K562 (cell line): ENCODE measurements at regions of chr3 and their contacts with region 1.

Region 1: GRCh38 chr3:152268555-152269425 is at the start of gene MBNL1:
- DNase-seq: peak; percentile 70 to 95 (median 79)
- ATAC-seq: peak; percentile 43
- H3K4me3 ChIP-seq: peak within 1 kb of the TSS; percentile 75
- H3K27ac ChIP-seq: peak within 1 kb of the TSS; percentile 96
- H3K4me1 ChIP-seq: peaks cover 8 to 22% of the 10 kb centered on the region in 2 experiments; a peak in 4 of 5 replicates
- H3K27me3 ChIP-seq: no peaks in the 10 kb centered on the region
- CTCF ChIP-seq: peak in 1 of 3 experiments; percentile 7; a peak in 1 of 6 replicates
- EP300 ChIP-seq: peak; percentile 65; the same call in 1 of the 2 replicates
- POLR2A ChIP-seq: peak; percentile 93
- RAD21 ChIP-seq: peak in 1 of 2 experiments; percentile 13; a peak in 2 of 4 replicates
- polyA plus RNA-seq, gene MBNL1: 70.3 to 87.3 TPM

Region 2: DNA sequence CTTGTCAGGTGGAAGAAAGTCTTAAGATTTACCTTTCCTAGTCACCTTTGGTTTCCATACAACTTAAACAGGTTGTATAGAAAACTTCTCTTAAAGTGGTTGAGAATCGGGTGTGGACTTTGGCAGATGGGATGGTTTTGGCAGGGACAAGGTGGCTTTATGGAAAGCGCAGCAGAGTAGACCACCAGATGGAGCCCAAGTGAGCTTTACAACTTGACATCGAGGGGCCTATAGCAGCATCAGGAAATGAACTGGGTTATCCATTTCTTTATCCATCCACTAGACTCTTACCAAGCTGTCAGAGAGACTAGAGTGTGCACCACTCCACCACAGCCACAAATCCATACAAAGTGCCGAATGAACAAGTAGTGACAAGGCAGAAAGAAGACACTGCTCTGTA is 85.3 kb before region 1 on chr3:
- CTCF ChIA-PET with region 1: no interaction called
- POLR2A ChIA-PET with region 1: interaction called, 4 read pairs
- in situ Hi-C with region 1: no loop called
- intact Hi-C with region 1: loop called (anchors 2 kb)
- DNase-seq: peak; percentile 51 to 88 (median 63)
- ATAC-seq: peak; percentile 97
- H3K4me3 ChIP-seq: no peak overlapping the region
- H3K27ac ChIP-seq: no peak overlapping the region
- H3K4me1 ChIP-seq: peaks cover 0 to 10% of the 10 kb centered on the region in 2 experiments; a peak in 2 of 5 replicates
- H3K27me3 ChIP-seq: no peaks in the 10 kb centered on the region
- CTCF ChIP-seq: peak; percentile 73 to 84 (median 78)
- EP300 ChIP-seq: no peak
- POLR2A ChIP-seq: no peak
- RAD21 ChIP-seq: peak; percentile 83 to 94

Region 3: GRCh38 chr3:152241142-152242017 is 27.4 kb before region 1 on chr3:
- CTCF ChIA-PET with region 1: no interaction called
- POLR2A ChIA-PET with region 1: interaction called, 35 read pairs
- in situ Hi-C with region 1: no loop called
- intact Hi-C with region 1: loop called (anchors 1 kb)
- DNase-seq: peak in 2 of 4 experiments; percentile 22 to 65
- ATAC-seq: no peak
- H3K4me3 ChIP-seq: no peak overlapping the region
- H3K27ac ChIP-seq: peak overlapping the region; percentile 92
- H3K4me1 ChIP-seq: peaks cover 13 to 34% of the 10 kb centered on the region in 2 experiments
- H3K27me3 ChIP-seq: no peaks in the 10 kb centered on the region
- CTCF ChIP-seq: no peak
- EP300 ChIP-seq: peak; percentile 73
- POLR2A ChIP-seq: no peak
- RAD21 ChIP-seq: no peak

Region 4: GRCh38 chr3:152291649-152292066 is 22.9 kb after region 1 on chr3:
- CTCF ChIA-PET with region 1: no interaction called
- POLR2A ChIA-PET with region 1: interaction called, 4 read pairs
- in situ Hi-C with region 1: no loop called
- intact Hi-C with region 1: loop called (anchors 2 kb)
- DNase-seq: no peak
- ATAC-seq: peak; percentile 47
- H3K4me3 ChIP-seq: no peak overlapping the region
- H3K27ac ChIP-seq: no peak overlapping the region
- H3K4me1 ChIP-seq: peaks cover 19 to 40% of the 10 kb centered on the region in 2 experiments
- H3K27me3 ChIP-seq: no peaks in the 10 kb centered on the region
- CTCF ChIP-seq: no peak
- EP300 ChIP-seq: no peak
- POLR2A ChIP-seq: no peak
- RAD21 ChIP-seq: no peak

Region 5: GRCh38 chr3:152444029-152444641 is 175.3 kb after region 1 on chr3:
- CTCF ChIA-PET with region 1: no interaction called
- POLR2A ChIA-PET with region 1: no interaction called
- in situ Hi-C with region 1: no loop called
- intact Hi-C with region 1: loop called (anchors 5 kb)
- DNase-seq: peak in 2 of 4 experiments; percentile 10 to 48
- ATAC-seq: peak; percentile 77
- H3K4me3 ChIP-seq: no peak overlapping the region
- H3K27ac ChIP-seq: no peak overlapping the region; the same call in 1 of the 3 replicates
- H3K4me1 ChIP-seq: no peaks in the 10 kb centered on the region
- H3K27me3 ChIP-seq: no peaks in the 10 kb centered on the region
- CTCF ChIP-seq: peak; percentile 24 to 65 (median 46); a peak in 5 of 6 replicates
- EP300 ChIP-seq: no peak
- POLR2A ChIP-seq: no peak
- RAD21 ChIP-seq: peak; percentile 76 to 82